Right cardiac atrium (tissue), 5 donors: ENCODE measurements at regions of chr11 and their contacts with region 1.

Region 1: GRCh38 chr11:65540297-65541092 is 15.6 kb downstream of the SCYL1 start:
- DNase-seq: peak; percentile 91 to 97 (median 96)
- ATAC-seq: peak; percentile 90 to 93
- H3K4me3 ChIP-seq: peak overlapping the region; percentile 36
- H3K27ac ChIP-seq: peak overlapping the region; percentile 90
- H3K4me1 ChIP-seq: peaks cover 6% of the 10 kb centered on the region
- H3K27me3 ChIP-seq: no peaks in the 10 kb centered on the region

Region 2: GRCh38 chr11:65593518-65594298 is 53.2 kb after region 1 on chr11:
- intact Hi-C with region 1: loop called in 1 of 4 experiments (anchors 5 kb)
- DNase-seq: peak; percentile 59 to 84 (median 83)
- ATAC-seq: peak; percentile 17 to 25
- H3K4me3 ChIP-seq: no peak overlapping the region
- H3K27ac ChIP-seq: no peak overlapping the region
- H3K4me1 ChIP-seq: no peaks in the 10 kb centered on the region
- H3K27me3 ChIP-seq: no peaks in the 10 kb centered on the region

Region 3: GRCh38 chr11:65606876-65607613 is 66.5 kb after region 1 on chr11:
- intact Hi-C with region 1: loop called in 2 of 4 experiments (anchors 10 kb)
- DNase-seq: peak; percentile 93 to 98 (median 98)
- ATAC-seq: peak; percentile 96 to 97
- H3K4me3 ChIP-seq: no peak overlapping the region
- H3K27ac ChIP-seq: peak overlapping the region; percentile 46
- H3K4me1 ChIP-seq: peaks cover 11% of the 10 kb centered on the region
- H3K27me3 ChIP-seq: no peaks in the 10 kb centered on the region